ENCODE measurements at regions of chr6 and their contacts with region 1.

Region 1: DNA sequence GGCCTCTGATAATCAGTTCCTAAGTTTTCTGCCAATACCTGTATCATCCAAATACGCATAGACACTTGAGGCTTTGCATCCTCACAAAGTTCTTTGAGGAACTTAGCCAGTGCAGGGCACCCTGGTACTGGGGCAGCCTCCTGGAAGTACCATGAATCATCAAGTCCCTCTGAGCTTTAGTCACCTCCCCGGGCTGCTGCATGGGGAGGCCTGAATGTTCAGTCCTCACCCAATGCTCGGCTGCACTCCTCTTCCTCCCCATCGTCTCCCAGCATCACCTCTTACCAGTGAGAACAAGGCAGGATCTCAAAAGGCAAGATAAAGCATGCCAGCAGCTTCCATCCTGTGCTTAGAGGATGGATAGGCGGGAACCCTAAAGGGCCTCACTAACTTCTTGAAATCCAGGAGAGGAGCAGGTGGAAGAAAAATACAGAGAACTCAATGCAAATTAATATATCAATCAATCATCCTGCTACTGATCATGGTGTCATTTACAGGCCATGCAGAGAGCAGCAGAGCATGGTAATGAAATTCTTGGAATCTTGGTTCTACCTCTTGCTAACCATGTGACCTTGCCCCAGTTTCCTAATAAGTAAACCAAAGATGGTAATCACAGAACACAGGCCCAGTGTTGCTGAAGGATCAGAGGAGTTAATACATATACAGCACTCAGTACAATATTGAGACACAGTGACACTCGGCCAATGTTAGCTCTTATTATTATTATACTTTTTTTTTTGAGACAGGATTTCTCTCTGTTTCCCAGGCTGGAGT is 4.7 kb upstream of the CCN6 start:
- DNase-seq: no peak
- H3K4me3 ChIP-seq: no peak overlapping the region
- H3K27ac ChIP-seq: no peak overlapping the region
- H3K27me3 ChIP-seq: no peaks in the 10 kb centered on the region
- CTCF ChIP-seq: no peak

Region 2: DNA sequence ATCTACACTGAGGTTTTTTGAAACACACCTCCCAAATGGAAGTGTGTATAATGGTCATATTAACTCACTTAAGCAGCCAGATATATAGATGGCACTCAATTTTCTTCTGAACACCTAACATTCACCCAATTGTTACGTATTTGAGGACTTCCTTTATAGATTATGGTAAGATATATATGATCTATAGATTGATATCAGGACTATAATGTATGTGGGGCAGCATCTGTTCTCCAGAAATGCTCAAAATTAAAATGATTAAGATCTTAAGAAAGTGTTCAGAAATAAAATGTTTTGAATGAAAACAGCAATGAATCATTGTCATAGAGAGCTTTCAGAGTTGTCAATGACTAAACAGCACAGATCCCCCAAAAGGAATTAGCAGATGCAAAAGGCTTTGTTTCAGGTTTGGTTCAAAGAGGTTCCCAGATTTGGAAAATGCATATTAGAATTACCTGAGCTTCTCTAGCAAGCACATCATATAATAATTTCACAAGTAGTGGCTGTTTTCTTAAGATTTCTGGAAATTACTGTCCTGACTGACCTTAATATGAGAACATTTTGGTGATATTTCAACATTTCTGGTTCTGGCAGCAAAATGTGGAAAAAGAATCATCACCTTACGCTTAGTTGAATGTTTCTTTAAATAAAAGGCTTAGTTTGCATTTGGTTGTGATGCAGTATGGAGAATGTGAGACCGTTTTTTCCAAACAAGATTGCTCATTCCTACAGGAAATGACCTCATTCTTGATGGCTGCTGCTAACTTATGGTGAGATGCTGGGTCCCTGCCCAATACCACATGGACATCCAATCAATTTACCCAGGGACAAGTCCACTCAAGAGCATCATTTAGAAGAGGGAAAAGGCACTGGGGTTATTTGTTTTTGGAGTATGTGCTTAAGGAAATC is 475.1 kb before region 1 on chr6:
- CTCF ChIA-PET with region 1: interaction called, 10 read pairs
- POLR2A ChIA-PET with region 1: no interaction called
- DNase-seq: peak; percentile 82
- H3K4me3 ChIP-seq: no peak overlapping the region
- H3K27ac ChIP-seq: peak overlapping the region; percentile 71
- H3K27me3 ChIP-seq: no peaks in the 10 kb centered on the region
- CTCF ChIP-seq: no peak

Region 3: DNA sequence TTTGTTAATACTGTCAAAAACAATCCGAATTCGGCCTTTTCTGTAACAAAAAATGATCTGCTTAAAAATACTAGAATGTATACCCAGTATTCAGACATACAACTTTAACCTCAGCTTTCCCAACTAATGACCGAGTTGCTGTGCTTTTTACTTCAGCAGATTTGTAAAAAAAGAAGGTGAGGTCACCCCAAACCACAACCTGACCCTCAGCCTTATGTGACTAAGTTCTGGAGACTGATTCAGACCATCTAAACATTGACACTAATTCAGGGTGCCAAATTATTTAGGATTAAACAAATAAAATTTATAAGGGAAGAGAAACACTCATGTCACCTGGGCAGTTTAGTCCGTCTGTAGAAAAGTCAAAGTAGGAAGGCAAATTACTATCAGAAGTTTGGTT is 12.4 kb after region 1 on chr6:
- CTCF ChIA-PET with region 1: no interaction called
- POLR2A ChIA-PET with region 1: no interaction called
- DNase-seq: no peak
- H3K4me3 ChIP-seq: no peak overlapping the region
- H3K27ac ChIP-seq: no peak overlapping the region
- H3K27me3 ChIP-seq: no peaks in the 10 kb centered on the region
- CTCF ChIP-seq: no peak

Region 4: DNA sequence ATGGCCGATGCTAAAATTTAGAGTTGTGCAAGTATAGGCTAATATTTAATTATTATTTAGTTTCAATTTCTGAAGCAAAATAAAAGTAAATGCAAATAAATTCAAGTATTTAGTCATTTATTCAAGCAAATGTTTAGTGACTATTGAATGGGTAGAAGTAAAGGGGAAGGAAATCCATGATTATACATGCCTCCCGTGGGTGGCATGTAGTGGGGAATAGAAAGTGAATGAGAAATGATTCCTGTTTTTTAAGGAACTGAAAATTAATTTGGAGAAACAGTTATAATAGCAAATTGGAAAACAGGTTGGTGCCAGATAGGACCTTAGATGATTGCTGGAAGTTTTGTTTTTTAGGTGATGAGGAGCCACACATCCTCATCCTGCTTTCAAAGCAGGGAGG is 73.5 kb after region 1 on chr6:
- CTCF ChIA-PET with region 1: no interaction called
- POLR2A ChIA-PET with region 1: no interaction called
- DNase-seq: no peak
- H3K4me3 ChIP-seq: no peak overlapping the region
- H3K27ac ChIP-seq: no peak overlapping the region
- H3K27me3 ChIP-seq: no peaks in the 10 kb centered on the region
- CTCF ChIP-seq: no peak

Region 5: GRCh38 chr6:112409311-112409710 is 360.1 kb after region 1 on chr6:
- CTCF ChIA-PET with region 1: no interaction called
- POLR2A ChIA-PET with region 1: no interaction called
- DNase-seq: no peak
- H3K4me3 ChIP-seq: no peak overlapping the region
- H3K27ac ChIP-seq: no peak overlapping the region
- H3K27me3 ChIP-seq: no peaks in the 10 kb centered on the region
- CTCF ChIP-seq: no peak